Adrenal gland (tissue), 19 donors: ENCODE measurements at regions of chr1 and their contacts with region 1.

Region 1: GRCh38 chr1:181424786-181425403 is 58.4 kb upstream of the CACNA1E start:
- DNase-seq: peak; percentile 64 to 93 (median 78)
- H3K4me3 ChIP-seq: no peak overlapping the region
- H3K27ac ChIP-seq: no peak overlapping the region
- H3K4me1 ChIP-seq: no peaks in the 10 kb centered on the region
- H3K27me3 ChIP-seq: peaks cover 5% of the 10 kb centered on the region
- CTCF ChIP-seq: peak; percentile 96 to 98 (median 97)
- POLR2A ChIP-seq: no peak

Region 2: DNA sequence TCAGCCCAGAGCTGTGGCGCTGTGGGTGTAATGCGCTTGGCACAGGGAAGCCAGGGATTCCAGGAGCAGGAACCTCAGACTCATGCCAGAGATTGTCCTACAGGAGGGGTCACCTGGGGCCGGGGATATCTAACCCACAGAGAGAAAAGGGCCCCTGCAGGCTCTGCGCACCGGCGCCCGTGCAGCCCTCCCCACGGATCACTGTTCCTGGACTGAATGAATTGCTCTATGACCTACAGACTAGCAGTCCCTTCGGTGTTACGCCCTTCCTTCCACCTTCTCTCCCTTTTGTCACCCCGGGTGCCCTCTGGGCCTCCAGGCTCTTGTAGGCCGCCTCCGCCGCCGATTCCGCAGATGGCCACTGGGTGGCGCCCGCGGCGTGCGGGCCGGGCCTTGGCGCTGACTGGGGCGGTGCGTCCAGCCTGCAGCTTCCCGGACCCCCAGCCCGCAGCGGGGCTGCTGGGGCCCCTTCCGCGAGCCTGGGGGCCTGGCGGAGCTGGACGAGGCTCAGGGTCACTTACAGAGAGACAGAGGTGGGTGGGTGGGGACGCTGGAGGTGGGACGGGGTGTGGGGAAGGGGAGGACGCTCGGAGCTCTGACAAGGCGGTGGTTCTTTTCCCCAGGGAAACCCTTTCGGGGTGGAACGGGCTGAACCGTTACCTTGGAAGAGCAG is 235.1 kb before region 1 on chr1:
- intact Hi-C with region 1: loop called (anchors 2 to 5 kb)
- DNase-seq: peak; percentile 30 to 85 (median 70)
- H3K4me3 ChIP-seq: peak overlapping the region in 1 of 4 donors; percentile 25
- H3K27ac ChIP-seq: no peak overlapping the region
- H3K4me1 ChIP-seq: no peaks in the 10 kb centered on the region
- H3K27me3 ChIP-seq: peaks cover 3% of the 10 kb centered on the region
- CTCF ChIP-seq: peak; percentile 83 to 98 (median 94)
- POLR2A ChIP-seq: no peak